GM12878 (cell line): ENCODE measurements at regions of chr9 and their contacts with region 1.

Region 1: DNA sequence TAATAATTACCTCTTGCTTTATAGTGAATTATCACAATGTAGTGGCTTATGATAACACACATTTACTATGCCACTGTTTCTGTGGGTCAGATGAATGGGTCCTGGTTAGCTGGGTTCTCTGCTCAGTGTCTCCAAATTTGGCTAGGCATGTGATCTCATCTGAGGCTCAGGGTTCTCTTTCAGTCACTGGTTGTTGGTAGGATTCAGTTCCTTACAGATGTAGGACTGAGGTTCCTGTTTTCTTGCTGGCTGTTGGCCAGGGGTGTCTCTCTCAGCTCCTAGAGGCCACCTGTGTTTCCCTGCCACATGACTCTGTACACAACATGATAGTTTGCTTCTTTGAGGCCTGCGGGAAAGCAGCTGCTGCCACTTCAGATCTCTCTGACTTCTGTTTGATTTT is 7.1 kb downstream of the NFX1 start:
- DNase-seq: peak; percentile 78
- ATAC-seq: peak; percentile 86
- H3K4me3 ChIP-seq: peak overlapping the region; percentile 67
- H3K27ac ChIP-seq: peak overlapping the region; percentile 77
- H3K4me1 ChIP-seq: peaks cover 25% of the 10 kb centered on the region
- H3K27me3 ChIP-seq: no peaks in the 10 kb centered on the region
- CTCF ChIP-seq: no peak
- EP300 ChIP-seq: peak; percentile 24 to 43; a peak in 1 of 4 replicates
- POLR2A ChIP-seq: no peak
- RAD21 ChIP-seq: no peak

Region 2: DNA sequence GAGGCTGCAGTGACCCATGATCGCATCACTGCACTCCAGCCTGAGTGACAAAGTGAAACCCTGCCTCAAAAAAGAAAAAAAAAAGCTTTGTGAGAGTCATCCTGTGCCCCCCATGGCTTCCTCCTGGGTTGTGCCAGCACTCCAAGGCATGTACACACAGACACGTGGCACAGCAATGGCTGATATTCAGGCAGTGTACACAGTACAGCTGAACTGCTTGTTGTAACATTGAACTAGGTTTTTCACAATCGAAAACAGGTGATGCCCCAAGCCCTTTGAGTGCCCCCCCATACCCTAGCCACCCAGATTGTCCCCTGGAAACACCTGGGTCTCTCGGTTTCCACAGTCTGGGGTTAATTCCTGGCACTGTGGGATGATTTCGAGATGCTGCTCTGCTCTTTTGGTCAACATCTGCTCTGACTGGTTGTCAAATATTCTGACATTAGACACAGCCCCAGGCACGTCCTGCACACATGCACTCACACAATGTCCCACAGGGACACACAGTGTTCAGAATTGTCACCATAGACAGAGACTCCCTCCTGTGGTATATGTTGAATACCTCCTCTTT is 48.3 kb before region 1 on chr9:
- CTCF ChIA-PET with region 1: no interaction called
- POLR2A ChIA-PET with region 1: no interaction called
- RAD21 ChIA-PET with region 1: no interaction called
- SMC1A ChIA-PET with region 1: no interaction called
- in situ Hi-C with region 1: loop called (anchors 5 kb)
- intact Hi-C with region 1: no loop called
- DNase-seq: no peak
- ATAC-seq: peak; percentile 79
- H3K4me3 ChIP-seq: no peak overlapping the region
- H3K27ac ChIP-seq: peak overlapping the region; percentile 10; the same call in 1 of the 2 replicates
- H3K4me1 ChIP-seq: peaks cover 16% of the 10 kb centered on the region
- H3K27me3 ChIP-seq: no peaks in the 10 kb centered on the region
- CTCF ChIP-seq: no peak
- EP300 ChIP-seq: no peak
- POLR2A ChIP-seq: no peak
- RAD21 ChIP-seq: 0 out of 2 replicates have a peak, but pooled peaks have one; percentile 9